Activated CD4-positive, alpha-beta memory T cell treated with anti-CD3 and anti-CD28 coated beads, Interleukin-2, amount 10 ng/mL, durations not matched to agents 7 days and 5 days (primary cell): ENCODE measurements at regions of chr16 and their contacts with region 1.

Region 1: DNA sequence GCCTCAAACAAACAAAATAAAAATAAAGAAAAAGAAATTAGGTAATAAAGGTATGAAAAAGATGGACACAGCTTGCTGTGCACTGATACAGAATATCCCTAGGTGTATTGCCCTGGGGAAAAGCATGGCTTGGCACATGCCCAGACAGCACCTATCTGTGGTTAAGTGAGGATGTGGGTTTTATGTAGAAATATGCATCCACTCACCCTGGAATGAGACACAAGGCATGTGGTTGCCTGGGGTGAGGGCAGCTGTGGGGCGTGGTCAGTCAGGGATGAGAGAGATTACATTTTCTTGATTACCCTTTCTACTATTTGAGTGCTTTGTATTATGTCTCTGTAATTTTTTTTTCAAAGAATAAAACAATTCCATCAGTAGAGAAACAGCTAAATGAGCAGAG is 6.9 kb downstream of the PLLP start:
- DNase-seq: peak; percentile 82
- H3K4me3 Mint-ChIP-seq: no peak overlapping the region
- H3K27ac Mint-ChIP-seq: no peak overlapping the region
- H3K4me1 Mint-ChIP-seq: peaks cover 48% of the 10 kb centered on the region
- H3K27me3 Mint-ChIP-seq: peaks cover 10% of the 10 kb centered on the region

Region 2: GRCh38 chr16:57167953-57168352 is 109.6 kb before region 1 on chr16:
- CTCF ChIA-PET with region 1: no interaction called
- POLR2A ChIA-PET with region 1: no interaction called
- DNase-seq: no peak
- H3K4me3 Mint-ChIP-seq: no peak overlapping the region
- H3K27ac Mint-ChIP-seq: no peak overlapping the region
- H3K4me1 Mint-ChIP-seq: peaks cover 3% of the 10 kb centered on the region
- H3K27me3 Mint-ChIP-seq: no peaks in the 10 kb centered on the region

Region 3: GRCh38 chr16:57300387-57301125 is 23.0 kb after region 1 on chr16:
- CTCF ChIA-PET with region 1: interaction called, 11 read pairs
- POLR2A ChIA-PET with region 1: interaction called, 10 read pairs
- DNase-seq: peak; percentile 99
- H3K4me3 Mint-ChIP-seq: no peak overlapping the region
- H3K27ac Mint-ChIP-seq: no peak overlapping the region
- H3K4me1 Mint-ChIP-seq: peaks cover 26% of the 10 kb centered on the region
- H3K27me3 Mint-ChIP-seq: no peaks in the 10 kb centered on the region